ENCODE measurements at regions of chr5 and their contacts with region 1.

Region 1: GRCh38 chr5:168268949-168269943 is 22.2 kb upstream of the WWC1 start:
- DNase-seq: peak; percentile 76
- ATAC-seq: peak; percentile 89
- H3K4me3 Mint-ChIP-seq: no peak overlapping the region
- H3K27ac Mint-ChIP-seq: no peak overlapping the region
- H3K4me1 Mint-ChIP-seq: peaks cover 5% of the 10 kb centered on the region
- H3K27me3 Mint-ChIP-seq: peaks cover 19% of the 10 kb centered on the region
- CTCF ChIP-seq: peak; percentile 86

Region 2: DNA sequence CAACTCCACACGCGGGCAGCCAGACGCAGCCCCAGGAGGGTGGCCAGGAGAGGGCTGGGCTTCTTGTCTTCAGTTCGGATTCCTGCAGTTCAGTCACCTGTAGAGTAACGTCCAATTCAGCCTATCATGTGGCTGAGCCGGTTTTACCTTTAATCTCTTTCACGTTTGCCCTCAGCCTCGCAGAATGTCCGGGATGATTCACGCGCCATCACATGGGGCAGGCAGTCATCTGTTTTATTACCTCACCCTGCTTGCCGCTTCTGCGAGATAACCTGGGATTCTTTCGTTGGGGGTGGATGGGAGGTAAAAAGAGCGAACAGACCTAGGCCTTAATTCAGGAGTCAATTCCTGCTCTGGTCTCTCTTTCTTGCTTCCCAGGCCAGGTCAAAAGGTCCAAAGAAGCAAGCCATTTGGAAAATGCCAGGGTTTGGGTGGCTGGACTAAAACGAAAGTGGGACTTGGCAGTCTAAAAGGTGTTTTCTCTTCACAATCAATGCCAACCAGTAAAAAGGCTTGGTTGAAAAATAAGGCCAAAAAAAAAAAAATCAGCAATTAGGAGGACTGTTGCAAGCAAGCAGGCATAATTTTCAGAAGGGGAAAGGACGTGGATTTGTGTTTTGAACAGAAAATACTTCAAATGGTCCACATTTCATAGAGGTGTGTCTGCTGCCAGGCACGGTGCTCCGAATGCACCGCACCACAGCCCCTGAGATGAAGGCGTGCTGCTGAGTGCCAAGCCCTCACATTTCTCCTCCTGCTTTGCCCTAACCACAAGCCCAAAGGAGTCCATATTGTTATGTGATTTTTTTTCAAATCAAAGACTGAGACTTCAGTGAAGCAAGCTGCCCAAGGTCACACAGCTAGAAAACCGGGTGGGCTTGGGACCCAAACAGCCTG is 19.4 kb after region 1 on chr5:
- CTCF ChIA-PET with region 1: no interaction called
- POLR2A ChIA-PET with region 1: no interaction called
- intact Hi-C with region 1: no loop called
- DNase-seq: no peak
- ATAC-seq: no peak
- H3K4me3 Mint-ChIP-seq: no peak overlapping the region
- H3K27ac Mint-ChIP-seq: no peak overlapping the region
- H3K4me1 Mint-ChIP-seq: peaks cover 5% of the 10 kb centered on the region
- H3K27me3 Mint-ChIP-seq: peaks cover 38% of the 10 kb centered on the region
- CTCF ChIP-seq: no peak

Region 3: GRCh38 chr5:168422431-168422830 is 153.2 kb after region 1 on chr5:
- CTCF ChIA-PET with region 1: interaction called, 6 read pairs
- POLR2A ChIA-PET with region 1: no interaction called
- intact Hi-C with region 1: loop called (anchors 5 kb)
- DNase-seq: no peak
- ATAC-seq: no peak
- H3K4me3 Mint-ChIP-seq: no peak overlapping the region
- H3K27ac Mint-ChIP-seq: no peak overlapping the region
- H3K4me1 Mint-ChIP-seq: no peaks in the 10 kb centered on the region
- H3K27me3 Mint-ChIP-seq: no peaks in the 10 kb centered on the region
- CTCF ChIP-seq: no peak

Region 4: DNA sequence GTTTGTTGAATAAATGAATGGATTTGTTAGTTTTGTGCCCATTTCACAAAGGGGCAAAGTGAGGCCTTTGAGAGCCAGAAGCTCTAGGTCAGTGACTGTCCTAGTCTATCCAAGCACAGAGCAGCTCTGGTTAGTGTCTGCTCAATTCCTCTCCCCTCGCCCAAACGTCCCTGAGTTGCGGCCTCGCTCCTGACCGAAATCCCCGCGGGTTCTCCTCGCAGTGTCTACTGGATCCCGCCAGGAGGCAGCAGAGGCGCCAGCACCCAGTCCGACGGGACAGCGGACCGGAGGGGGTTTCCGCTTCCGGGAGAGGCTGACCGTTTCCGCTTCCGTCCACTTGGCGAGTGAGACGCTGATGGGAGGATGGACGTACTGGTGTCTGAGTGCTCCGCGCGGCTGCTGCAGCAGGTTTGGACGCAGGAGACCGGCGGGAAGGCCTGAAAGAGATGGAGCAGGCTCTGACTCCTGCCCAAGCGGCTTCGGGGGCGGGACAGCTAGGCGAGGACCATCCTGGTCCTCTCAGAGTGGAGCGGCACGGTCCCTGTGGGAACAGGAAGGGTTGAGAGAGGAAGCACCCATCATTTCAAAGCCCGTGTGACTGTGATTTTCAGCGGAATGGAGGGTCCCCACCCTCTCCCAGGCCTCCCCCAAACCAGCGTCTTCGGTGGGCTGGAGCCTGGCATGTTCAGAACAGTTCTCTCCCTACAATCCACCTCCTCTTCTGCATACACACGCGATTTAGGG is 217.1 kb after region 1 on chr5 and contains the start of gene RARS1:
- CTCF ChIA-PET with region 1: interaction called, 4 read pairs
- POLR2A ChIA-PET with region 1: no interaction called
- intact Hi-C with region 1: loop called (anchors 10 kb)
- DNase-seq: peak; percentile 93
- ATAC-seq: peak; percentile 97
- H3K4me3 Mint-ChIP-seq: peak within 1 kb of the TSS; percentile 99
- H3K27ac Mint-ChIP-seq: peak within 1 kb of the TSS; percentile 98
- H3K4me1 Mint-ChIP-seq: peaks cover 34% of the 10 kb centered on the region
- H3K27me3 Mint-ChIP-seq: no peaks in the 10 kb centered on the region
- CTCF ChIP-seq: peak; percentile 98
- total RNA-seq, gene RARS1: 110 to 113 TPM